ENCODE measurements at regions of chr1 and their contacts with region 1.

Region 1: GRCh38 chr1:174159252-174160108 is at the start of gene RABGAP1L:
- DNase-seq: peak; percentile 96
- ATAC-seq: peak; percentile 86
- H3K4me3 ChIP-seq: peak within 1 kb of the TSS; percentile 76 to 98 (median 93)
- H3K4me3 Mint-ChIP-seq: peak within 1 kb of the TSS; percentile 95
- H3K27ac ChIP-seq: peak within 1 kb of the TSS; percentile 85 to 89
- H3K27ac Mint-ChIP-seq: peak within 1 kb of the TSS; percentile 97
- H3K4me1 ChIP-seq: peaks cover 29 to 48% of the 10 kb centered on the region in 2 donors
- H3K4me1 Mint-ChIP-seq: peaks cover 60% of the 10 kb centered on the region
- H3K27me3 ChIP-seq: no peaks in the 10 kb centered on the region
- H3K27me3 Mint-ChIP-seq: no peaks in the 10 kb centered on the region
- CTCF ChIP-seq: no peak
- total RNA-seq, gene RABGAP1L: 159 and 163 TPM in 2 replicates

Region 2: GRCh38 chr1:173714759-173715537 is 444.5 kb before region 1 on chr1 and contains the start of gene KLHL20:
- CTCF ChIA-PET with region 1: no interaction called
- POLR2A ChIA-PET with region 1: no interaction called
- intact Hi-C with region 1: loop called (anchors 1 kb)
- DNase-seq: peak; percentile 90
- ATAC-seq: peak; percentile 93
- H3K4me3 ChIP-seq: peak within 1 kb of the TSS; percentile 76 to 92 (median 84)
- H3K4me3 Mint-ChIP-seq: peak within 1 kb of the TSS; percentile 98
- H3K27ac ChIP-seq: peak within 1 kb of the TSS; percentile 75 to 84
- H3K27ac Mint-ChIP-seq: peak within 1 kb of the TSS; percentile 96
- H3K4me1 ChIP-seq: peaks cover 10 to 15% of the 10 kb centered on the region in 2 donors
- H3K4me1 Mint-ChIP-seq: peaks cover 23% of the 10 kb centered on the region
- H3K27me3 ChIP-seq: peaks cover 0 to 9% (median 2%) of the 10 kb centered on the region in 4 experiments
- H3K27me3 Mint-ChIP-seq: peaks cover 26% of the 10 kb centered on the region
- CTCF ChIP-seq: no peak
- total RNA-seq, gene KLHL20: 32.2 and 35.4 TPM in 2 replicates

Region 3: DNA sequence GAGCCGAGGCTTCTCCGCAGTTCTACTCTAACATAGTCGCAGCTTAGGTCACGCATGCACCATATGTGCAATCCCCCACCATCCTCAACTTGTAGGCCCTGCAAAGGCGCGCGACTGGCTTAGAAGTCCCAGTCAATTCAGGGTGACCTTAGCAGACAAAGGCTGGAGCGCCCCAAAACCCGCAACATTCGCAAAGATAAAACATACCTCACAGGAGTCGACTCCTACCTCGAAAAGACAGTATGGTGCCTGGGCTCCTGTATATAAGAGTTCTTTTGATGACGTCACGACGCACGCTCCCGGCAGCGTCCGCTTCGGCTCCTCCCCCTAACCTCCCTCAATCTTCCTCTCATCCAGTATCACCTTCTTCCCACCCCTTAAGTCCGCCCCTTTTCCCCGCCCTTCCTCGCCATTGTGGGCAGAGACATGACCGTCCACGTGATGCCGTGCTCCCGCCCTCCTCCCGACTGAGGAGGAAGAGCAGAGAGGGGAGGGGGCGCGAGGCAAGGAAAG is 291.7 kb before region 1 on chr1 and contains the start of gene GAS5:
- CTCF ChIA-PET with region 1: no interaction called
- POLR2A ChIA-PET with region 1: interaction called, 7 read pairs
- intact Hi-C with region 1: loop called (anchors 1 kb)
- DNase-seq: peak; percentile 99
- ATAC-seq: peak; percentile 77
- H3K4me3 ChIP-seq: peak within 1 kb of the TSS; percentile 70 to 98 (median 89)
- H3K4me3 Mint-ChIP-seq: peak within 1 kb of the TSS; percentile 94
- H3K27ac ChIP-seq: peak within 1 kb of the TSS; percentile 90 to 93
- H3K27ac Mint-ChIP-seq: peak within 1 kb of the TSS; percentile 98
- H3K4me1 ChIP-seq: peaks cover 42 to 50% of the 10 kb centered on the region in 2 donors
- H3K4me1 Mint-ChIP-seq: peaks cover 70% of the 10 kb centered on the region
- H3K27me3 ChIP-seq: no peaks in the 10 kb centered on the region
- H3K27me3 Mint-ChIP-seq: no peaks in the 10 kb centered on the region
- CTCF ChIP-seq: no peak
- total RNA-seq, gene GAS5: 590 and 622 TPM in 2 replicates

Region 4: DNA sequence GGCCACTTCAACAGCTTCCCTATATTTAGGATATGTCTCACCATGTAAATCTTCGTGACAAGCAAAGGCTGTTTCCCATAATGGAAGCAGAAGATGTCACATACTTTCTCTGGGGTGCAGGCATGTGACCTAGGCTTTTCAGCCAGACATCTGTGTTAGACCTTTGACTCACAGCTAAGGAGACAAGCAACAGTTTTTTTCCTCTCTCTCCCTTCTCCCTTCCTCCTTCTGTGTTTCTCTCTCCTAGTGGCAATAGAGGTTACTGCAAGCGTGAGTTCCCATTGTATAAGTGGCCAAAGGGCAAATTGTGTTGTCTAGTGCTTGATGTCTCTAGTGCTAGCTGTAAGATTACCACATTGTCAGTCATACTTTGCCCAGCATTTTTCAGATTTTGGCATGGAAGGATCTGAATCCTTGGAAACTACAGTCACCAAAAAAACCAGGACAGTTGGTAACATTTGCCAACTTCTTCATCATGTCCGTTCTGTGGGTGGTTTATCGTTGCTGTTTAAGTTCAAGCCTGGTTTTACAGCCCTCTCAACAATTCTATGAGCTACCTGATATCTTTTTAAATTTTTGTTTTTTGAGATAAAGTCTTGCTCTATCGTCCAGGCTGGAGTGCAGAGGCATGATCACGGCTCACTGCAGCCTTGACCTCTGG is 44.6 kb before region 1 on chr1:
- CTCF ChIA-PET with region 1: no interaction called
- POLR2A ChIA-PET with region 1: interaction called, 4 read pairs
- intact Hi-C with region 1: loop called (anchors 5 kb)
- DNase-seq: peak; percentile 63
- ATAC-seq: peak; percentile 64
- H3K4me3 ChIP-seq: no peak overlapping the region
- H3K4me3 Mint-ChIP-seq: no peak overlapping the region
- H3K27ac ChIP-seq: no peak overlapping the region
- H3K27ac Mint-ChIP-seq: no peak overlapping the region
- H3K4me1 ChIP-seq: peaks cover 4 to 5% of the 10 kb centered on the region in 2 donors
- H3K4me1 Mint-ChIP-seq: peaks cover 13% of the 10 kb centered on the region
- H3K27me3 ChIP-seq: no peaks in the 10 kb centered on the region
- H3K27me3 Mint-ChIP-seq: no peaks in the 10 kb centered on the region
- CTCF ChIP-seq: peak; percentile 81

Region 5: DNA sequence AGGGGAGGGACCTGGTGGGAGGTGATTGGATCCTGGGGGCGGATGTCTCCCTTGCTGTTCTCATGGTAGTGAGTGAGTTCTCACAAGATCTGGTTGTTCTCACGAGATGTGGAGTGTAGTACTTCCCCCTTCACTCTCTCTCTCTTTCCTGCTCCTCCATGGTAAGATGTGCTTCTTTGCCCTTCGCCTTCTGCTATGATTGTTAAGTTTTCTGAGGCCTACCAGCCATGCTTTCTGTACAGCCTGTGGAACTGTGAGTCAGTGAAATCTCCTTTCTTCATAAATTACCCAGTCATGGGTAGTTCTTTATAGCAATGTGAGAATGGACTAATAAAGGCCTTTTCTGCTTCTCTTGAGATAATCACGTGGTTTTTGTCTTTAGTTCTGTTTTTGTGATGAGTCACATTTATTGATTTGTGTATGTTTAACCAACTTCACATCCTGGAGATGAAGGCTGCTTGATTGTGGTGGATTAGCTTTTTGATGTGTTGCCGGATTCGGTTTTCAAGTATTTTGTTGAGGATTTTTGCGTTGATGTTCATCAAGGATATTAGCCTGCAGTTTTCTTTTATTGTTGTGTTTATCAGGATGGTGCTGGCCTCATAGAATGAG is 45.3 kb after region 1 on chr1:
- CTCF ChIA-PET with region 1: no interaction called
- POLR2A ChIA-PET with region 1: interaction called, 3 read pairs
- intact Hi-C with region 1: loop called (anchors 2 kb)
- DNase-seq: peak; percentile 38
- ATAC-seq: peak; percentile 17
- H3K4me3 ChIP-seq: no peak overlapping the region
- H3K4me3 Mint-ChIP-seq: peak overlapping the region; percentile 40
- H3K27ac ChIP-seq: peak overlapping the region in 1 of 2 donors; percentile 35
- H3K27ac Mint-ChIP-seq: peak overlapping the region; percentile 61
- H3K4me1 ChIP-seq: peaks cover 17 to 22% of the 10 kb centered on the region in 2 donors
- H3K4me1 Mint-ChIP-seq: peaks cover 54% of the 10 kb centered on the region
- H3K27me3 ChIP-seq: no peaks in the 10 kb centered on the region
- H3K27me3 Mint-ChIP-seq: no peaks in the 10 kb centered on the region
- CTCF ChIP-seq: no peak

Region 6: GRCh38 chr1:175023043-175023921 is 863.8 kb after region 1 on chr1 and contains the start of gene MRPS14:
- CTCF ChIA-PET with region 1: no interaction called
- POLR2A ChIA-PET with region 1: no interaction called
- intact Hi-C with region 1: loop called (anchors 10 kb)
- DNase-seq: peak; percentile 99
- ATAC-seq: peak; percentile 95
- H3K4me3 ChIP-seq: peak within 1 kb of the TSS; percentile 91 to 99 (median 95)
- H3K4me3 Mint-ChIP-seq: peak within 1 kb of the TSS; percentile 95
- H3K27ac ChIP-seq: peak within 1 kb of the TSS; percentile 84 to 87
- H3K27ac Mint-ChIP-seq: peak within 1 kb of the TSS; percentile 92
- H3K4me1 ChIP-seq: peaks cover 10 to 15% of the 10 kb centered on the region in 2 donors
- H3K4me1 Mint-ChIP-seq: peaks cover 28% of the 10 kb centered on the region
- H3K27me3 ChIP-seq: no peaks in the 10 kb centered on the region
- H3K27me3 Mint-ChIP-seq: no peaks in the 10 kb centered on the region
- CTCF ChIP-seq: no peak
- total RNA-seq, gene MRPS14: 26.5 and 29.4 TPM in 2 replicates

Region 7: DNA sequence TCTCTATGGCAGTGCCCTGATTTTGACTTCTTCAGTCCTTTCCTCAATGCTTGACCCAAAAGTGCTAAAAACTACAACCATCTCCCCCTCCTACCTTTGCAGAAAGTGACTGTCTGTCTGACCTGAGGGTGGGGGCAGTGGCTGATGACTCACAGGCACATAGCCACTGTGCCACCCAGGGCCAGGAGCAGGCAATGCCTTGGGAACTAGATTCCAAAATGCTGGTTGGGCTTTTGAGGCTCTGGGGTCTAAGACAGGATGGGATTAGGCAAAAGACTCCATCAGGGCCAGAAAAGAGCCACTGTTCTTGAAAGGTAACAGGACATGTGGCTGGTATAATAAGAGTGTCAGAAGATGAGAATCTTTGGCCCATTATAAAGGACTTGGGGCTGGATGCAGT is 1162.6 kb after region 1 on chr1:
- CTCF ChIA-PET with region 1: no interaction called
- POLR2A ChIA-PET with region 1: no interaction called
- intact Hi-C with region 1: no loop called
- DNase-seq: no peak
- ATAC-seq: no peak
- H3K4me3 ChIP-seq: no peak overlapping the region
- H3K4me3 Mint-ChIP-seq: no peak overlapping the region
- H3K27ac ChIP-seq: no peak overlapping the region
- H3K27ac Mint-ChIP-seq: no peak overlapping the region
- H3K4me1 ChIP-seq: peaks cover 6 to 14% of the 10 kb centered on the region in 2 donors
- H3K4me1 Mint-ChIP-seq: peaks cover 26% of the 10 kb centered on the region
- H3K27me3 ChIP-seq: peaks cover 0 to 3% (median 0%) of the 10 kb centered on the region in 4 experiments
- H3K27me3 Mint-ChIP-seq: no peaks in the 10 kb centered on the region
- CTCF ChIP-seq: no peak